Calu3 (cell line): ENCODE measurements at regions of chr3 and their contacts with region 1.

Region 1: DNA sequence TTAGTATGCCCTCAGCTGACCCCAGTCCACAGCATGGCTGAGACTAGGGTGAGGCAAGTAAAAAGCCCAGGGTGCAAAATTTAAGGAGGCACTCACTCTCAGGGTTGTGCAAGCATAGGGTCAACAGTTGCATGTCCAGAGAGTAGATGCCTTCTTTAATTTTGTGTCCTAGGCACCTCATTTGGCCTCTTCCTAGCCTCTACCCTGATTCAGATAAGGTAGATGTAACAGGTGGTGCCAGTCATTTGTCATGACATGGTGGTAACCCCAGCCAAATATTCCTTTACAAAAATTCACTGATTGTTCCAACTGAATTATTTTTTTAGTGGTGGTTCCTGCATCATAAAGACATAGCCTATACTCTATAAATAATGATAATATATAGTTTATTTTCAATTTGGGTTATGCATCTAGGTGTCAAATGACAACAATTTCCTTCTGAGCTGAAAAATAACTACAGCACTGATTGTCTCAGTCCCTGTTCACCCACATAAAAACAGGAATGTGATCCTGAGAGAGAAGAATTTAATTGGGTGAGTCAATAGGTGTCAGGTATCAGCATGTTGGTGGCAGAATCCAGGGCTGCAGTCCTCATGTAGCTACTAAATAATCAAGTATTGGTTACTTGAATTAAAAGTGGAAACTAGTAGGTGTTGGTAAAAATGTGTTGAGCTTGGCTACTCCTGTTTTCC is 44.2 kb upstream of the TIPARP start:
- DNase-seq: peak; percentile 45
- H3K4me3 Mint-ChIP-seq: no peak overlapping the region
- H3K27ac Mint-ChIP-seq: no peak overlapping the region
- H3K4me1 Mint-ChIP-seq: peaks cover 57% of the 10 kb centered on the region
- H3K27me3 Mint-ChIP-seq: no peaks in the 10 kb centered on the region
- CTCF ChIP-seq: no peak

Region 2: GRCh38 chr3:156460206-156460611 is 170.0 kb before region 1 on chr3:
- CTCF ChIA-PET with region 1: no interaction called
- intact Hi-C with region 1: no loop called
- DNase-seq: no peak
- H3K4me3 Mint-ChIP-seq: no peak overlapping the region
- H3K27ac Mint-ChIP-seq: no peak overlapping the region
- H3K4me1 Mint-ChIP-seq: peaks cover 27% of the 10 kb centered on the region
- H3K27me3 Mint-ChIP-seq: no peaks in the 10 kb centered on the region
- CTCF ChIP-seq: no peak

Region 3: GRCh38 chr3:156519758-156520162 is 110.5 kb before region 1 on chr3:
- CTCF ChIA-PET with region 1: no interaction called
- intact Hi-C with region 1: no loop called
- DNase-seq: no peak
- H3K4me3 Mint-ChIP-seq: no peak overlapping the region
- H3K27ac Mint-ChIP-seq: no peak overlapping the region
- H3K4me1 Mint-ChIP-seq: no peaks in the 10 kb centered on the region
- H3K27me3 Mint-ChIP-seq: no peaks in the 10 kb centered on the region
- CTCF ChIP-seq: no peak

Region 4: GRCh38 chr3:156664831-156665178 is 34.6 kb after region 1 on chr3:
- CTCF ChIA-PET with region 1: no interaction called
- intact Hi-C with region 1: loop called (anchors 1 kb)
- DNase-seq: no peak
- H3K4me3 Mint-ChIP-seq: no peak overlapping the region
- H3K27ac Mint-ChIP-seq: no peak overlapping the region
- H3K4me1 Mint-ChIP-seq: peaks cover 37% of the 10 kb centered on the region
- H3K27me3 Mint-ChIP-seq: no peaks in the 10 kb centered on the region
- CTCF ChIP-seq: no peak

Region 5: GRCh38 chr3:156762631-156763185 is 132.5 kb after region 1 on chr3:
- CTCF ChIA-PET with region 1: no interaction called
- intact Hi-C with region 1: no loop called
- DNase-seq: no peak
- H3K4me3 Mint-ChIP-seq: no peak overlapping the region
- H3K27ac Mint-ChIP-seq: no peak overlapping the region
- H3K4me1 Mint-ChIP-seq: peaks cover 22% of the 10 kb centered on the region
- H3K27me3 Mint-ChIP-seq: no peaks in the 10 kb centered on the region
- CTCF ChIP-seq: no peak